ENCODE measurements at regions of chr2 and their contacts with region 1.

Region 1: DNA sequence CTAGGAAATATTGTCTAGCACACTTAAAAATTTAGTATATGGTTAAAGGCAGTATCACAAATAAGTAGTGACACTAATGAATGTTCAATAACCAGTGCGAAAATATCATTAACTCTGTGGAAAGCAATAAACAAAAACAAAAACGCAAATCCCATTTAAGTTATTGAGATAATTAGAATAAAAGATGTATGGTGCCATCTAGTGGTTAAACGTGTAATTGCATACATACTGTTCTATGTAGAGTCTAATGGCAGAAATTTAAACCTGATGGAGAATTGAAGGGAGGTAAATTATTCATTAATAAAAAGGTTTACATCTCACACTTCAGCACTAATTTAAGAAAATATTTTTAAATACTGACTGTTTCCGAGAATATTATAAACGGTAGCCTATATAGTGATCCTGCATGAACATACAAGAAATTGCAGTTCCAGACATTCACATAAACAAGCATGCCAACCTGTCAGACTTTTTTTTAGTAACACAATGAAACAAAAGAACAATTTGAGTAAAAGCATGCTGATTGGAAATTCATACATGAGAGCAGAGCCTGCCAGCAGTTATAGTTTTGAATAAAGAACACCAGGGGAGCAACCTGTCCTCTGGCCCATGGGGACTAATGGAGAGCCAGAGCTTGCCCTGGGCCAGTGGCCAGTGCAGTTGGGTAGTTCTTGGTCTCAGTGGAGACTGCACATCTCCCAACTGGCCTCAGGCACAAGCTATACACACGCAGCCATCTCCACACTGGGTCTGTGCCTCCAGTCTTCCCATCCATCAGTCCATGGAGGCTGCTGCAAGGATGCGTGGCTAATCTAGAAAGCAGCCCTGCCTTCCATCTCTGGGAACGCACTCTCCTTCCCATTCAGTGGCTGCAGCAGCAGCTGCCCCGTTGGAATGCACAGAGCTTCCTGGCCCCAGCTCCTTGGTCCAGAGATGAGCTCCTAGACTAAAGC is 28.0 kb downstream of the GCG start:
- DNase-seq: no peak
- H3K4me3 Mint-ChIP-seq: no peak overlapping the region
- H3K27ac Mint-ChIP-seq: no peak overlapping the region
- H3K4me1 Mint-ChIP-seq: peaks cover 21% of the 10 kb centered on the region
- H3K27me3 Mint-ChIP-seq: no peaks in the 10 kb centered on the region

Region 2: DNA sequence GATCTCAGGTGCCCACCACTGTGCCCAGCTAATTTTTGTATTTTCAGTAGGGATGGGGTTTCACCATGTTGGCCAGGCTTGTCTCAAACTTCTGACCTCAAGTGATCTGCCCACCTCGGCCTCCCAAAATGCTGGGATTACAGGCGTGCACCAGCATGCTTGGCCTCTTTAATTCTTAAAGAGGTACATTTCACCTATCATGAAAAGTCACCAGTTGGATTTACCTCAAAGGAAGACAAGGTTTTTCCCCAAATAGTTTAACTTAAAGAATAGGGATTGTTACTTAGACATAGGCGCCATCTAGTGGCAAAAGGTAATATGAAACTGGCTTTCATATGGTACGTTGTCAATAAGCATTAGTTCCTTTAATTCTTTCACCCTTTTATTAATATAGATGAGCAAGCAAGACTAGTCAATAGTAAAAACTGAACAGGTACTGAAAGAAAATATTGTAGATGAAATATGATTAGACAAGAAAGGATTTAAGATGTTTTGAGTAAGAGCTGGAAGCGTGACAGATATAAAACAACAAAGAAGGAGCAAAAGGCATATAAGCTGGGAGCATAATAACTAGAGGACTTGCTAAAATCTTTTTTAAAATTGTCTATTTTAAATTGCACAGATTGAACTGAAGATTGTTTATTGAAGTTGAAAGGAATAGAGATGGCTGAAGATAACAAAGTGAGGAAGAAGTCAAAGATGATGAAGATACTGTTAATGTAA is 850.9 kb before region 1 on chr2:
- intact Hi-C with region 1: loop called (anchors 10 kb)
- DNase-seq: no peak
- H3K4me3 Mint-ChIP-seq: no peak overlapping the region
- H3K27ac Mint-ChIP-seq: no peak overlapping the region
- H3K4me1 Mint-ChIP-seq: peaks cover 5% of the 10 kb centered on the region
- H3K27me3 Mint-ChIP-seq: peaks cover 25% of the 10 kb centered on the region

Region 3: GRCh38 chr2:161586517-161587167 is 537.4 kb before region 1 on chr2:
- intact Hi-C with region 1: loop called (anchors 1 kb)
- DNase-seq: no peak
- H3K4me3 Mint-ChIP-seq: no peak overlapping the region
- H3K27ac Mint-ChIP-seq: no peak overlapping the region
- H3K4me1 Mint-ChIP-seq: peaks cover 4% of the 10 kb centered on the region
- H3K27me3 Mint-ChIP-seq: peaks cover 26% of the 10 kb centered on the region

Region 4: DNA sequence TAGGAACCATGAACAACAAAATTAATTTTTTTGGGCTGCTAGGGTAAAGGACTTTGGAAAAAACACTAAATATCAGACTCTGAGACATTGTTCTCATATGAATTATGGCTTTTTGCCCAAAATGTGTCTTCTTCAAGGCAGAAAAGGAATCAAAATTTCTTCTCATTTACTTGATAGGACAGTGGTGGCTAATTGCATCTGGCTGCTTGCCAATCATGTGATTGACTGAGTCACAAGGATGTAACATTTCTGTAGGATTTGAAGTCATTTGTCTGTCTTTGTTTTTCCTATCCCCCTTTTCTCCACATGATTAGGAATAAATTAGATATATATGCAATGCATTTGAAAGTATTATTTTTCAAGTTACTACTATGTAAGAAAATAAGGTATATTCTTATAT is 369.7 kb before region 1 on chr2:
- intact Hi-C with region 1: no loop called
- DNase-seq: no peak
- H3K4me3 Mint-ChIP-seq: no peak overlapping the region
- H3K27ac Mint-ChIP-seq: no peak overlapping the region
- H3K4me1 Mint-ChIP-seq: no peaks in the 10 kb centered on the region
- H3K27me3 Mint-ChIP-seq: peaks cover 9% of the 10 kb centered on the region

Region 5: DNA sequence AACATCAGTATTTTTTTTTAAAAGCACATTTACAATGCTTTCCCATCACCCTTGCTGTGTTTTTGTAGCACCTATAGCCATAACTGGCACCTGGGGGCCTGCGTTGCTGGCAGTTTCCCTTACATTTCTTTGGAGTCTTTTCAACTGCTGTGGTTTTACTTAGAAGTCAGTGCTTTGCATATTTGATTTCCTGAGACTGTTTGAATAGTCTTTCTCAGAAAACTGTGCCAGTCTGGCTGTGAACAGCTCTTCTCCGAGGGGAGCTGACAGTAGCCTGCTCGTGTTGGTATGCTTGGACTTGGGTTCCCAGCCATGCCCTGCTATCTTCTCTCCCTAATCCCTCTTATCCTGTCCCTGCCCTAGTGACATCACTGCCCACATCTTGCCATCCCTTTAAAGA is 131.6 kb before region 1 on chr2:
- intact Hi-C with region 1: loop called (anchors 2 kb)
- DNase-seq: peak; percentile 61
- H3K4me3 Mint-ChIP-seq: peak overlapping the region; percentile 83
- H3K27ac Mint-ChIP-seq: peak overlapping the region; percentile 96
- H3K4me1 Mint-ChIP-seq: peaks cover 78% of the 10 kb centered on the region
- H3K27me3 Mint-ChIP-seq: no peaks in the 10 kb centered on the region

Region 6: GRCh38 chr2:162013514-162014475 is 110.3 kb before region 1 on chr2:
- intact Hi-C with region 1: no loop called
- DNase-seq: no peak
- H3K4me3 Mint-ChIP-seq: peak overlapping the region; percentile 81
- H3K27ac Mint-ChIP-seq: peak overlapping the region; percentile 95
- H3K4me1 Mint-ChIP-seq: peaks cover 95% of the 10 kb centered on the region
- H3K27me3 Mint-ChIP-seq: no peaks in the 10 kb centered on the region

Region 7: GRCh38 chr2:162037028-162037795 is 86.9 kb before region 1 on chr2:
- intact Hi-C with region 1: loop called (anchors 5 kb)
- DNase-seq: no peak
- H3K4me3 Mint-ChIP-seq: no peak overlapping the region
- H3K27ac Mint-ChIP-seq: no peak overlapping the region
- H3K4me1 Mint-ChIP-seq: peaks cover 66% of the 10 kb centered on the region
- H3K27me3 Mint-ChIP-seq: no peaks in the 10 kb centered on the region